Activated T-helper 1 cell treated with anti-CD3 and anti-CD28 coated beads, Interleukin-12 subunit alpha, Interleukin-12 subunit beta, Interleukin-2, Interleukin-4 antibody, amounts not matched to agents 30 ng/mL and 10 ng/mL and 1 ng/mL, durations not matched to agents 14 hours and 24 hours and 36 hours (primary cell): ENCODE measurements at regions of chr12 and their contacts with region 1.

Region 1: GRCh38 chr12:121917979-121918678 is at the start of gene CFAP251:
- DNase-seq: peak; percentile 92
- H3K4me3 Mint-ChIP-seq: peak within 1 kb of the TSS; percentile 80
- H3K27ac Mint-ChIP-seq: peak within 1 kb of the TSS; percentile 71
- H3K4me1 Mint-ChIP-seq: peaks cover 15% of the 10 kb centered on the region
- H3K27me3 Mint-ChIP-seq: peaks cover 2% of the 10 kb centered on the region
- total RNA-seq, gene CFAP251: 0.65 and 0.76 TPM in 2 replicates

Region 2: DNA sequence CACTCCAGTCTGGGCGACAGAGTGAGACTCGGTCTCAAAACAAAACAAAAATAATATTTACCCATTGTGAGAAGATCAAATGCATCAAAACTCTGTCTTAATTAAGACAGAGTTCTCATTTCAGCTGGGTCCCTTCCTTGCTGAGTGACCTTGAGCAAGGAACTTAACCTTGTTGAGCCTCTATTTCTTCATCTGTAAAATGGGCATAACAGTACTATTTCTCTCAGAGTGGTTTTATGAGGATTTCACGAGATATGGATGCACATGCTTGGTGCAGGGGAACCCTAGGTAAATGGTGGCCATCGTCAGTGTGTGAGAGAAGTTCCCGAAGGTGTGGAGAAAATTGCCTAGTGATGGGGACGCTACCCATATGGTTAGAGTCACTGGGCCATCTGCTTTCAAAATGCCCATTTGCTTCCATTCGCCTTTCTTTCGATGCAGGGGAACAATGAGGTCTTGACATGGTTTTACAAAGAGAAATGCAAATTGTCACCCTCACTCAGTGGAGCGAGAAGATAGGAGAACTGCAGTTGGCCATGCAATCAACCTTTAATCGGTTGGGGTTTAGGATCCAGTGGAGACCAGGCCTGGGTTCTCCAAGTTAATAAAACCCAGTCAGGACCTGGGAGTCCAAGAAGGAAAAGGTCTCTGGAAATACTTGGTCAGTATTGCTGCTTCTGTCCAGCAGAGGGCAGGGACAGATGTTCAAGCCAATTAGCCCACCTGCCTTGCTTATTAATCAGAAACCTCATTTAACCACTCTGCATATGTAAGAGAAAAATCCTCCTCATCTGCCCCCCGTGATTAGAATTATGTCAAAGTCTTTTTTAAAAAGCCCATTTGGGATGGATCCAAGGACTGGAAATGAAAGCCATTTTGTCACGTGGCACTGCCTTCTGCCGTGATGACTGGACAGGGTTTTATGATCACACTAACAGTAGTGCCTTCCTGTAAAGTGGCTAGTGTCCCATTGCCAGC is 37.4 kb after region 1 on chr12:
- intact Hi-C with region 1: no loop called
- DNase-seq: no peak
- H3K4me3 Mint-ChIP-seq: no peak overlapping the region
- H3K27ac Mint-ChIP-seq: no peak overlapping the region
- H3K4me1 Mint-ChIP-seq: no peaks in the 10 kb centered on the region
- H3K27me3 Mint-ChIP-seq: peaks cover 10% of the 10 kb centered on the region

Region 3: GRCh38 chr12:122021822-122022526 is 103.8 kb after region 1 on chr12 and contains the start of gene BCL7A:
- intact Hi-C with region 1: loop called (anchors 2 kb)
- DNase-seq: peak; percentile 47
- H3K4me3 Mint-ChIP-seq: peak within 1 kb of the TSS; percentile 87
- H3K27ac Mint-ChIP-seq: peak within 1 kb of the TSS; percentile 92
- H3K4me1 Mint-ChIP-seq: peaks cover 13% of the 10 kb centered on the region
- H3K27me3 Mint-ChIP-seq: peaks cover 32% of the 10 kb centered on the region
- total RNA-seq, gene BCL7A: 9.7 and 13.0 TPM in 2 replicates

Region 4: GRCh38 chr12:122035292-122035691 is 117.2 kb after region 1 on chr12:
- intact Hi-C with region 1: no loop called
- DNase-seq: no peak
- H3K4me3 Mint-ChIP-seq: no peak overlapping the region
- H3K27ac Mint-ChIP-seq: no peak overlapping the region
- H3K4me1 Mint-ChIP-seq: no peaks in the 10 kb centered on the region
- H3K27me3 Mint-ChIP-seq: no peaks in the 10 kb centered on the region